Esophagus squamous epithelium (tissue), 5 donors: ENCODE measurements at regions of chrX and their contacts with region 1.

Region 1: GRCh38 chrX:139739138-139739537 is 31.2 kb upstream of the MCF2 start:
- DNase-seq: no peak
- H3K4me3 ChIP-seq: no peak overlapping the region
- H3K27ac ChIP-seq: no peak overlapping the region
- H3K4me1 ChIP-seq: no peaks in the 10 kb centered on the region
- H3K27me3 ChIP-seq: no peaks in the 10 kb centered on the region
- CTCF ChIP-seq: no peak
- POLR2A ChIP-seq: no peak

Region 2: GRCh38 chrX:139795196-139795595 is 56.1 kb after region 1 on chrX:
- intact Hi-C with region 1: loop called (anchors 10 kb)
- DNase-seq: no peak
- H3K4me3 ChIP-seq: no peak overlapping the region
- H3K27ac ChIP-seq: no peak overlapping the region
- H3K4me1 ChIP-seq: no peaks in the 10 kb centered on the region
- H3K27me3 ChIP-seq: no peaks in the 10 kb centered on the region
- CTCF ChIP-seq: no peak
- POLR2A ChIP-seq: no peak